ENCODE measurements at regions of chr2 and their contacts with region 1.

Region 1: DNA sequence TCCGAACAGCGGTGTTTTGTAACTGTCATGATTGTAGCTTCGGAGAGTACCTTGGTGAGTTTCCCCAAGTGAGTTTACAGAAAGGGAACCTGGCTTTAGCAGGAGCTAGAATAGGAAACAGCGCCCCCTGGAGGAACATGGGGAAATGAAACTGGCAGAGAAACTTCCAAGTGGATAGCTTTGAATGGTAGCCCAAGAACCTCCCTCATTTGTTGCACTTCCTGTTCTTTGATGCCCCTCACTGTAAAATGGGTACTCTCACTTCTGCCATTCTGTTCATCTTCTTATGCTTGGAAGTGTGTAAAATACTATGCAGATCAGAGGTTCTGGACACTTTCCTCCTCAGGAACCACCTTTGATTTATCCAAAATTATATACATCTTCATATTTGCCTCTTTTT is 36.2 kb downstream of the CHST10 start:
- DNase-seq: peak; percentile 87
- ATAC-seq: peak; percentile 53
- H3K4me3 Mint-ChIP-seq: no peak overlapping the region
- H3K27ac Mint-ChIP-seq: no peak overlapping the region
- H3K4me1 Mint-ChIP-seq: peaks cover 2% of the 10 kb centered on the region
- H3K27me3 Mint-ChIP-seq: no peaks in the 10 kb centered on the region

Region 2: GRCh38 chr2:99559075-99559662 is 822.1 kb before region 1 on chr2:
- CTCF ChIA-PET with region 1: interaction called, 7 read pairs
- POLR2A ChIA-PET with region 1: interaction called, 3 read pairs
- intact Hi-C with region 1: loop called (anchors 2 to 5 kb)
- DNase-seq: peak; percentile 92
- ATAC-seq: peak; percentile 97
- H3K4me3 Mint-ChIP-seq: no peak overlapping the region
- H3K27ac Mint-ChIP-seq: no peak overlapping the region
- H3K4me1 Mint-ChIP-seq: peaks cover 2% of the 10 kb centered on the region
- H3K27me3 Mint-ChIP-seq: no peaks in the 10 kb centered on the region

Region 3: DNA sequence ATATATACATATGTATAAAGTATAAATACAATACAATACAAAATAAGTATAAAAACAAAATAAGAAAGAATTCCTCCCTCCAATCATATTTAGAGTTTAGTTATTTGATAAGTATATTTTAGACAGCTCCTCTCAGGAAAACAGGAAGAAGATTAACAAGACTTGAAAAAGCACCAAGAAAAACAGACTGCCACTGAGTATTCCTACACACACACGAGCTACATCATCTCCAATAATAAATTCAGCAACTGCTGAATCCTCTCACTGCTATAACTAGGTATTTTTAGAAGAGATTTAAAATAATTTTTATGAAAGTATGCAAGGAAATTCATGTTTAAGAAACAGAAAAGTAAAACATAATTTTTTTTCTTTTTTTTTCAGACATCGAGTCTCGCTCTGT is 71.9 kb before region 1 on chr2:
- CTCF ChIA-PET with region 1: interaction called, 10 read pairs
- POLR2A ChIA-PET with region 1: no interaction called
- intact Hi-C with region 1: no loop called
- DNase-seq: no peak
- ATAC-seq: no peak
- H3K4me3 Mint-ChIP-seq: no peak overlapping the region
- H3K27ac Mint-ChIP-seq: no peak overlapping the region
- H3K4me1 Mint-ChIP-seq: peaks cover 2% of the 10 kb centered on the region
- H3K27me3 Mint-ChIP-seq: peaks cover 12% of the 10 kb centered on the region

Region 4: DNA sequence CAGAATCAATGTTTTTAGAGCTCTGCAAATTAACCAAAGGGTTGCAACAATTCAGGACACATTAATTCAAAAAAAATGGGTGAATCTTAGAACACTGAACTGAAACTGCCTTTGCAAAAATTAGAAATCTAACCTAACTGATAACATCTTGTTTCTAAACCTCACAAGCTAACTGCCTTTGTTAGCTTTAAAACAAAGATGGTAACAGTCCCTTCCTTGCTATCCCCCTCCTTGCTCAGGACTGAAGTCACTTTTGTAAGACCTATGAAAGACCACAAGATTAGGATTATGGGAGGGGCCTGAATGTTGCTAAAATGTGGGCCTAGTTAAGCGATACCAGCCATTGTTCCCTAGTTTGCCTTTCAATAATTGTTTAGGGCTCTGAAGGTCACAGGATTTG is 14.1 kb before region 1 on chr2:
- CTCF ChIA-PET with region 1: interaction called, 13 read pairs
- POLR2A ChIA-PET with region 1: no interaction called
- intact Hi-C with region 1: no loop called
- DNase-seq: no peak
- ATAC-seq: no peak
- H3K4me3 Mint-ChIP-seq: no peak overlapping the region
- H3K27ac Mint-ChIP-seq: no peak overlapping the region
- H3K4me1 Mint-ChIP-seq: no peaks in the 10 kb centered on the region
- H3K27me3 Mint-ChIP-seq: peaks cover 4% of the 10 kb centered on the region

Region 5: DNA sequence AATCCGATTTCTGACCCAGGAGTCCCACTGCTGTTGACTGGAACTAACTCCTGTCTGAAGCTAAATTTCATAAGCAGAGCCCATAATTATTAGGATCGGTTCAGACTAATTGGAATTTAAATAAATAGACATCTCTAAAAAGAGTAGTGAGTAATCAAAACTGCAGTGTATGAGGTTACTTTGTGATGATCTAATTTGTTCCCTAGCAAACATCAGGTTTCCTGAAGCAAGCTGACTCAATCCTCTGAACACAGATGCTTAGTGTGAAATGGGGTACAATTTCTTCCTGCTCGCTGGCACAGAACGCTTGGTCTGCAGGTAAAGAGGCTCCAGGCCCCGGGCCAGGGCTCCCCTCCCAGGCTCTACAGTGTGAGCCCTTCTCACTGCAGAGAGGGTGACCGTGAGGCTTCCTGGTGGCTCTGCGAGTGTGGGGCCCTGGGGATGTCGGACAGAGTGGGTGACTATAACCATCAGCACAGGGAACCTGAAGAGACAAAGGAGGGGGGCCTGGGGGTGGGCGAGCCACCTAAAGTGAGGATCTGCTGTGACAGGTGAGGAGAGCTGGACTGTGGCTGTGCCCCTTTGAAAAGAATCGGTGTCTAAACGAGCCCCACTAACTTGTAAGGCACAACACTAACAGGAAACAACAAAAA is 16.0 kb after region 1 on chr2:
- CTCF ChIA-PET with region 1: no interaction called
- POLR2A ChIA-PET with region 1: no interaction called
- intact Hi-C with region 1: no loop called
- DNase-seq: no peak
- ATAC-seq: no peak
- H3K4me3 Mint-ChIP-seq: no peak overlapping the region
- H3K27ac Mint-ChIP-seq: no peak overlapping the region
- H3K4me1 Mint-ChIP-seq: no peaks in the 10 kb centered on the region
- H3K27me3 Mint-ChIP-seq: no peaks in the 10 kb centered on the region

Region 6: DNA sequence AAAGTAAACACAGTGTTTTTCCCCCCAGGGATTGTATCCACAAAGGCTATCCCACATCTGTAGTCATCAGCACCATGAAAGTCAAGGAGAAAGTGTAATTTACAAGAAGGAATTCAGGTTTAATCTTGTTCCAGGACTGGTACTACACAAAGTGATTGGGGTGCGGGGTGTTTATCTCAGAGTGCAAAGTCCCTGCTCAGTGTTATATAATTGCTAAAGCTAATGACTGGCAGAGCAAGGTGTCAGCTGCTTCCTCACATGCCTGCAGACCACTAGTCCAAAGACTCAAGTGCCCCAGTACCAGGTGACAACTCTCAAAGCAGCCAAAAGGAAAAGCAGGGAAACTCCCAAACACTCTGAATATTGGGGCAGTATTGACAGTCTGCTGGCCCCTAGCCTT is 141.2 kb after region 1 on chr2:
- CTCF ChIA-PET with region 1: no interaction called
- POLR2A ChIA-PET with region 1: no interaction called
- intact Hi-C with region 1: no loop called
- DNase-seq: no peak
- ATAC-seq: no peak
- H3K4me3 Mint-ChIP-seq: no peak overlapping the region
- H3K27ac Mint-ChIP-seq: no peak overlapping the region
- H3K4me1 Mint-ChIP-seq: no peaks in the 10 kb centered on the region
- H3K27me3 Mint-ChIP-seq: no peaks in the 10 kb centered on the region

Measured in activated CD4-positive, alpha-beta T cell treated with anti-CD3 and anti-CD28 coated beads for 36 hours (primary cell).